ENCODE measurements at regions of chr18 and their contacts with region 1.

Region 1: GRCh38 chr18:57970356-57971080 is 73.5 kb upstream of the NEDD4L start:
- DNase-seq: peak; percentile 26
- ATAC-seq: no peak
- H3K4me3 Mint-ChIP-seq: no peak overlapping the region
- H3K27ac Mint-ChIP-seq: no peak overlapping the region
- H3K4me1 Mint-ChIP-seq: no peaks in the 10 kb centered on the region
- H3K27me3 Mint-ChIP-seq: peaks cover 5% of the 10 kb centered on the region

Region 2: GRCh38 chr18:58128381-58129374 is 158.2 kb after region 1 on chr18:
- CTCF ChIA-PET with region 1: no interaction called
- POLR2A ChIA-PET with region 1: no interaction called
- intact Hi-C with region 1: loop called in 1 of 2 experiments (anchors 5 kb)
- DNase-seq: no peak
- ATAC-seq: no peak
- H3K4me3 Mint-ChIP-seq: no peak overlapping the region
- H3K27ac Mint-ChIP-seq: no peak overlapping the region
- H3K4me1 Mint-ChIP-seq: no peaks in the 10 kb centered on the region
- H3K27me3 Mint-ChIP-seq: no peaks in the 10 kb centered on the region